ENCODE measurements at regions of chr13 and their contacts with region 1.

Region 1: DNA sequence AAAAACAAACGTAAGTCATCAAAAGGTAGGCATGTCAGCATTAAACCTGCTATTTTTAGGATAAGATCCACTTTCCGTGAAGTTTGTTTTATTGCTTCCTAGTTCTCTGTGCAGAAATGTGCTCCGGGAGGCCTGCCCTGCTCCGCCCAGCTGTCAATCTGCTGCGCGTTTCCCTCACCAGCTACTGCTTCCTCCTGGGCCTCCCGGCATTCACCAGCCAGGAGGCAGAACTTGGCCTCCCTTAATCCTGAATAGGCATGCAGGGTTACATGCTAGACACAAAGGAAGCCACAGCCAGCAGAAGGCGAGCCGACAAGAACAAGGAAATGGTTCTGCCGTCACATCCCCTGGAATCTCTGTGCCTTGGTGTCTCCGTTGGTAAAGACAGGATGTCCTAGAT is 386.2 kb downstream of the IRS2 start:
- DNase-seq: no peak
- H3K4me3 ChIP-seq: no peak overlapping the region
- H3K27ac ChIP-seq: no peak overlapping the region
- H3K4me1 ChIP-seq: no peaks in the 10 kb centered on the region
- CTCF ChIP-seq: no peak

Region 2: GRCh38 chr13:109288151-109288709 is 112.0 kb before region 1 on chr13:
- CTCF ChIA-PET with region 1: no interaction called
- POLR2A ChIA-PET with region 1: no interaction called
- intact Hi-C with region 1: no loop called
- DNase-seq: no peak
- H3K4me3 ChIP-seq: no peak overlapping the region
- H3K27ac ChIP-seq: no peak overlapping the region
- H3K4me1 ChIP-seq: no peaks in the 10 kb centered on the region
- CTCF ChIP-seq: no peak

Region 3: GRCh38 chr13:109427148-109427547 is 26.9 kb after region 1 on chr13:
- CTCF ChIA-PET with region 1: no interaction called
- POLR2A ChIA-PET with region 1: no interaction called
- intact Hi-C with region 1: no loop called
- DNase-seq: no peak
- H3K4me3 ChIP-seq: no peak overlapping the region
- H3K27ac ChIP-seq: no peak overlapping the region
- H3K4me1 ChIP-seq: no peaks in the 10 kb centered on the region
- CTCF ChIP-seq: no peak

Region 4: GRCh38 chr13:109465156-109465555 is 64.9 kb after region 1 on chr13:
- CTCF ChIA-PET with region 1: no interaction called
- POLR2A ChIA-PET with region 1: no interaction called
- intact Hi-C with region 1: loop called (anchors 10 kb)
- DNase-seq: no peak
- H3K4me3 ChIP-seq: no peak overlapping the region
- H3K27ac ChIP-seq: no peak overlapping the region
- H3K4me1 ChIP-seq: no peaks in the 10 kb centered on the region
- CTCF ChIP-seq: no peak